ENCODE measurements at regions of chr2 and their contacts with region 1.

Region 1: GRCh38 chr2:218568190-218569037 is at the starts of genes CNOT9 and USP37:
- DNase-seq: peak; percentile 100
- ATAC-seq: peak; percentile 92
- H3K4me3 Mint-ChIP-seq: peak within 1 kb of the TSS; percentile 96
- H3K27ac Mint-ChIP-seq: peak within 1 kb of the TSS; percentile 100
- H3K4me1 Mint-ChIP-seq: peaks cover 58% of the 10 kb centered on the region
- H3K27me3 Mint-ChIP-seq: no peaks in the 10 kb centered on the region
- total RNA-seq, gene CNOT9: 100 to 105 TPM
- total RNA-seq, gene USP37: 42.5 to 46.8 TPM

Region 2: DNA sequence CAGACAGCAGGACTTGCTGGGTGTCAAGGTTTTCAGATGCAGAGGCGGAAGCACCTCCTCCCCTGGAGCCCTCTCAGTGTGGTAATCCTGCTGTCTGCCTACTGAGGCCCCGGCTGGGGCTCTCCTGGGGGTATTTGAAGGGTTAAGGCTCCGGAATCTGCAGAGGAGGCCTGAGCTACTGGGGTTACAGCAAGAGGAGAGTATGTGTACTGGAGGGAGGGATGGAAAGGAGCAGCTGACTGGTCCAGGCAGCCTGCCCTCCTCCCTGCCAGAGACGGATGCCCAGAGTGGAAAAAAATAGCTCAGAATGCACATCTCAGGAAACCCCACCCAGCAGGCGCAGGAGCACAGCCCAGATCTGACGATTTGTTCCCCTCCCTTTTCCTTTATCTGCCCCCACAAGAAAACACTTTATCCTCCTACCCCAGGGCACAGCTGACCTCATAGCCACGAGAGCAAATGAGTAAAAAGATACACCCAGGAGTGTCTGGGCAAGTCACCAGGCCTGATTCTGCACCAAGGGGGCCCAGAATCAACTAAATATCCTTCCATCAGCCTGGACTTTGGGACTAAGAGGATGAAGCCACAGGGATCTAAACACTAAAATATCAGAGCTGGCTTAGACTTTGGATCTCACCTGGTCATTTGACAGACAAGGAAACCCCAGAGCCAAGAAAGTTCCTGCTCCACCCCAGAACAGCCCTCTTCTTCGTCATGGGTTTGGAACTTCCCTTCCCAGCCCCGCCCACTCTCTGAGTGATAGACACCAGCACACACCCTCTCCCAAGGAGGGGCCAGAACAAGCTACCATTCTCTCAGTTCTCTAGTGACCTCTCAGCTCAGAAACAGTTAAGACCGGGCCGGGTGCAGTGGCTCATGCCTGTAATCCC is 281.6 kb before region 1 on chr2:
- CTCF ChIA-PET with region 1: interaction called, 3 read pairs
- POLR2A ChIA-PET with region 1: no interaction called
- intact Hi-C with region 1: loop called (anchors 1 to 5 kb)
- DNase-seq: peak; percentile 91
- ATAC-seq: peak; percentile 74
- H3K4me3 Mint-ChIP-seq: peak overlapping the region; percentile 80
- H3K27ac Mint-ChIP-seq: peak overlapping the region; percentile 99
- H3K4me1 Mint-ChIP-seq: peaks cover 88% of the 10 kb centered on the region
- H3K27me3 Mint-ChIP-seq: no peaks in the 10 kb centered on the region

Region 3: GRCh38 chr2:218516614-218517013 is 51.8 kb before region 1 on chr2:
- CTCF ChIA-PET with region 1: no interaction called
- POLR2A ChIA-PET with region 1: no interaction called
- intact Hi-C with region 1: loop called in 1 of 2 experiments (anchors 5 kb)
- DNase-seq: peak; percentile 10
- ATAC-seq: peak; percentile 73
- H3K4me3 Mint-ChIP-seq: no peak overlapping the region
- H3K27ac Mint-ChIP-seq: no peak overlapping the region
- H3K4me1 Mint-ChIP-seq: peaks cover 30% of the 10 kb centered on the region
- H3K27me3 Mint-ChIP-seq: no peaks in the 10 kb centered on the region

Region 4: DNA sequence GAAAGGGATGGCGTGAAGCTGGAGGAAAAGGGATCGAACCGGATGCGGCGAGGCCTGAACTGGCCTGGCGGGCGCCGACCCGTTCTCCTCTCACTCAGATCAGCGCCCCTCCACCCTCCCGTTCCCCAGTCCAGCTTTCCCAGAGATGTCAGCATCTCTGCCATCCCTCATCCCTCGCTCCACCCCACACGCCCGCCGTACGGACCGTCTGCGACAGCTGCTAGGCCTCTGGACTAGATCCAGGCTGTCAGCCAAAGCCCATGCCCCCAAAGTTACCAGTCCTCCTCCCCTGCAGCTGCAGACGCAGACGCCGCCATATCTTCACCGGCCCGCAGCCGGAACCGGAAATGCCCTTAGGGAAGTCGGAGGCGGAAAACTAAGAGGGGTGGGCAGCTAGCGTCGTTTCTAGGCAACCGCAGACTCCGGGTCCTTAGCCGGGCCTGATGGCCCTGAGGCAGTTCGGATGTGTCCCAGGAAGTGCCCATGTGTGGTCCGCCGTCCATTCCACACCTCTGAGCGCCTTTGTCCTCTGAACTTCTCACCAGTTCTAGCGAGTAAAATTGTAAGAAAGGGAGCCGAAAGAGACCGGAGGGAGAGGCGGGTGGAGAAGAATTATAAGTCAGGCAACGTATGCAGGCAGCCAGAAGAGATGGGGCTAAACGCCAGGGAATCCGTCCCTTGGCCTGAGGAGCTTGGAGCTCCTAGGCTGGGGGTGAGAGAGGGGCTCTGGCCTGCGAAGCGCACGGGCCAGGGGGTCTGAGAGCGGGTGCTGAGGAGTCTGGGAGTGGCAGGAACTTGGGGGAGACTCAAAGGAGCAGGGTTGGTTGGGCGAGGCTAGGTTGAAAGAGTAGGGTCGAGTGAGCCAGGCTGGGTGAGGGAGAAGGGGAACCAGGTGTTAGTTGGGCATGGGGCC is 103.5 kb after region 1 on chr2 and contains the starts of genes RNF25 and STK36:
- CTCF ChIA-PET with region 1: no interaction called
- POLR2A ChIA-PET with region 1: no interaction called
- intact Hi-C with region 1: loop called in 1 of 2 experiments (anchors 1 kb)
- DNase-seq: peak; percentile 90
- ATAC-seq: peak; percentile 98
- H3K4me3 Mint-ChIP-seq: peak within 1 kb of the TSS; percentile 95
- H3K27ac Mint-ChIP-seq: peak within 1 kb of the TSS; percentile 87
- H3K4me1 Mint-ChIP-seq: peaks cover 22% of the 10 kb centered on the region
- H3K27me3 Mint-ChIP-seq: no peaks in the 10 kb centered on the region
- total RNA-seq, gene RNF25: 14.1 to 29.2 TPM
- total RNA-seq, gene STK36: 13.1 to 19.3 TPM

Region 5: DNA sequence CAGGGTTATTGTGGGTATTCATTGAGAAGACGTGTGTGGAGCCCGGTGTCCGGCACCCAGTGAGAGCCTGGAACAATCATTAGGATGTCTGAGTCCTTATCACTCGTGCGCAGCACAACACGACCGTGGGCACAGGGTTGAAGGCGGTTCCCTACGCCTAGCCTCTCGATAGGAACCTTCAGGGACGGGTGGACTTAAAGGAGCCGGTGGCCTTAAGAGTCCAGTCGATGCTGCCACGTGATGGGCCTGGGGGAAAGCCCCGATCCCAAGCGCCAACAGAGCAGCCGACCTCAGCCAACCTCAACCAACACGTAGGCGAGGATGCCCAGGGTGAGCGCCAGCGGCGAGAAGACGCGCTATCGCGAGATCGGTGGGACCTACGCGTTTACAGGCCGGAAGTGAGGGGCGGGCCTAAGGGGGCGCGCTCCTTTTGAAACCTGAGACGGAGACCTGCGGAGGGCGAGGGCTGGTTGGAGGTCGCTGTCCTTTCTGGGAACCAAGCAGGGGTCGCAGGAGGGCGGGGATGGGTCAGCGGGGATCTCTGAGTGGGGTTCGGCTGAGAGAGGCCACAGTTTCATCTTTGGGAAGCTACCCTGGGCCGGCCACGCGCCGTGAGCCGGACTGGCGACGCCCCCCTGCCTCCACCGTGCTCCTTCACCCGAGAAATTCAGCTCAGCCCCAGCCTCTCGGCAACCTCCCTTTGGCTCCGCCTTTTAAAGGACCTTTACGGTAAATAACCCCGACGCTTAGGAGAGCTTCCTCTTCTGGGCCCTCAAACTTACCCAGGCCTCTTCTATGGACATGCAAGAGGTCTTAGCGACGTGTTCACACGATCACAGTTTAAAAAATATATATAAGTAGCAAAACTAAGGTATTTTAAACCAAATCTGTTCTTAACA is 340.6 kb after region 1 on chr2:
- CTCF ChIA-PET with region 1: no interaction called
- POLR2A ChIA-PET with region 1: no interaction called
- intact Hi-C with region 1: loop called in 1 of 2 experiments (anchors 1 kb)
- DNase-seq: peak; percentile 97
- ATAC-seq: peak; percentile 98
- H3K4me3 Mint-ChIP-seq: peak overlapping the region; percentile 85
- H3K27ac Mint-ChIP-seq: peak overlapping the region; percentile 83
- H3K4me1 Mint-ChIP-seq: peaks cover 13% of the 10 kb centered on the region
- H3K27me3 Mint-ChIP-seq: peaks cover 16% of the 10 kb centered on the region

Region 6: DNA sequence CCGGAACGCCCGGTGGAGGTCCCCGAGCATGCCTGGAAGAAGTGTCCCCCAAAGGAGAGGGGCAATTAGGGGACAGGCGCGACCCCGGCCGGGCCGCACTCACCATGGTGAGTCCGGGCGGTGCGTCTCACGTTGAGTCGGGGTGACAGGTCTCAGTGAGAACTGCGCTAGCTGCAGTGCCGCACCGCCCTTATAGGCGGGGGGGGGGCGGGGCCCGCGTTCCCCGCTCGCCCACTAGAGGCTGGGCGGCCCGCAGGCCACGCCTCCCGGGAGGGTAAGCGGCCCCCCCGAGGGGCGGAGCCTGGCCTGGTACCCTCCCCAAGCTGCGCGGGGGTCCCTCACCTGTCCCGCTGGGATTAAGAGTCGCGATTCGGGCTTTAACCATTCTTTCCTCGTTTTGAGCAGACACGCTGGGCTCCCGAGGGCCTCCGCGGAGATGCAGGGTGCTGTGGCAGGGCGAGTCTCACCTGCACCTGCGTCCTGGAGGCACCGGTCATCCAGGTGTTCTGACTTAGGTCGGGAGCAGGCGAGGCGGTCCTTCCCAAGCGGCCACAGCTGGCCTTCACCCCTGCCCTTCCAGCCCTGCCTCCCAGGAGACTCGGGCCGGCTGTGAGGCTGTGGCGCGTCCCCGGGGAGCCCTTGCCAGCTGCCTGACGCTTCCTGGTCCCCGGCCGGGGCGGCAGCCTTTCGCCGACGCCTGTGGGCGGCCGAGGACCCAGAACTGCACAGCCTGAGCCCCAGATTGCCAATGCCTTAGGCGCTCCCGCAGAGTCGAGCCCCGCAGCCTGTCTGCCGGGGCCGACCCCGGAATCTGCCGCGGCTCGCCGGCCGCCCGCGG is 685.6 kb after region 1 on chr2 and contains the start of gene TUBA4A:
- CTCF ChIA-PET with region 1: no interaction called
- POLR2A ChIA-PET with region 1: no interaction called
- intact Hi-C with region 1: loop called in 1 of 2 experiments (anchors 1 kb)
- DNase-seq: peak; percentile 94
- ATAC-seq: peak; percentile 63
- H3K4me3 Mint-ChIP-seq: peak within 1 kb of the TSS; percentile 89
- H3K27ac Mint-ChIP-seq: peak within 1 kb of the TSS; percentile 93
- H3K4me1 Mint-ChIP-seq: peaks cover 54% of the 10 kb centered on the region
- H3K27me3 Mint-ChIP-seq: no peaks in the 10 kb centered on the region
- total RNA-seq, gene TUBA4A: 210 to 369 TPM

Measured in activated CD4-positive, alpha-beta T cell treated with anti-CD3 and anti-CD28 coated beads for 36 hours (primary cell).